Dendritic cell treated with granulocyte-macrophage colony-stimulating factor and Interleukin-4, amounts not matched to agents 40 ng/mL and 50 ng/mL, for 4 days (primary cell): ENCODE measurements at regions of chr4 and their contacts with region 1.

Region 1: DNA sequence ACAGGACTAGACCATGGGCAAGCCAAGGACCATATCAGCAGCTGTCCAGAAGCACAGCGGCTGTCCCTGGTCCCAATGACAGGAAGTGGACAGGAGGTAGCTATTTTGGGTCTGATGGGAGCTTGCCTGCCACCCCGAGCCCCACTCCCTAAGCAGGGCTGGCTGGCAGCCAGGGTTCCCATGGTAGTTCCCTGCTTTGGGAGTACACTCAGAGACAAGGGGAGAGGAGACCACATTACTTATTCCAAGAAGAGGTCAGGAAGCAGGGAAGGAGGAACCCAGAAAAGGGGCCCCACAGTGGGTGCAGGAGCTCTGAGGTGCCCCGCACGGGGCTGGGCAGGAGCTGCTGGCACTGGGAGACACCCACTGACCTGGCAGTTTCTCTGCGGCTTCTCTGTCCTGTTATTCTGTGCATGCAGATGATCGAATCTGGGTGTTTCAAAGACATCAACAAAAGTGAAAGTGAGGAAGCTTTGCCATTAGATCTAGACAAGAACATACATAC is 36.3 kb downstream of the HTT-AS start:
- H3K4me3 Mint-ChIP-seq: peak overlapping the region; percentile 76
- H3K27ac Mint-ChIP-seq: peak overlapping the region; percentile 37
- H3K4me1 Mint-ChIP-seq: peaks cover 46% of the 10 kb centered on the region
- H3K27me3 Mint-ChIP-seq: peaks cover 42% of the 10 kb centered on the region

Region 2: GRCh38 chr4:2977211-2978088 is 60.6 kb before region 1 on chr4:
- intact Hi-C with region 1: loop called (anchors 5 kb)
- H3K4me3 Mint-ChIP-seq: no peak overlapping the region
- H3K27ac Mint-ChIP-seq: no peak overlapping the region
- H3K4me1 Mint-ChIP-seq: peaks cover 5% of the 10 kb centered on the region
- H3K27me3 Mint-ChIP-seq: peaks cover 8% of the 10 kb centered on the region